Heart left ventricle (tissue), 16 donors: ENCODE measurements at regions of chr7 and their contacts with region 1.

Region 1: DNA sequence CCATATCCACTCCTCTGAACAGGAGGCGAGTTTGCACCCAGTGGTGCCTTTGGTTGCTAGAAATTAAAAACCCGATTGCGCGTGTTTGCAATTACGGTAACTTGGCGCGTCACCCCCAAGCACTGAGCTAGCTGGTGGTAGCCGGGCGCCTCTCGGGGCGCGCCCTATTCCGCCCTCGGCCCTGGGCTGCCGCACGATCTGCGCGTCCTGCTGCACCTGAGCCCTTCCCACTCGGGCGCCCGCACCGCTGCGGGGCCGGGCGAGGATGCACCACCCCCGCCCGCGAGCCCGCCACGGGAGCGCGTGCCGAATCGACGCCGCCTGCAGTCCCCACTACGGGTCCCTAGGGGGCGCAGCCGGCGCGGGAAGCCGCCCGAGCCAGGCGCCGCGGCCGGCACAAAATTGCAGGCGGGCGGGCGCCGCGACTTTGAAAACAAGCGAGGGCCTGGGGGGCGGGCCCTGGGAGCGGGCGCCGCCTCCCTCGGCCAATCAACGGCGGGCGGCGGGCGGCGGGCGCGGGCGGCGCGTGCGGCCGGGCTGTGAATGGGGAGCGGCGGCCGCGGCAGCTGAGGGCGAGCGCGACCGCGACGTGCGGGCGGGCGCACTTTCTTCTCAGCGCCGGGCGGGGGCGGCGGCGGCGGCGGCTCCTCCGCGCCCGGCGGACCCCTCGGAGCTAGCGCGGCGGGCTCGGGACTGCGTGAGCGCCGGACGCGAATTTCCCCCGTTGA is at the start of gene SDK1:
- DNase-seq: peak; percentile 91 to 96 (median 93)
- ATAC-seq: peak; percentile 77 to 99 (median 98)
- H3K4me3 ChIP-seq: peak within 1 kb of the TSS; percentile 34 to 84 (median 58)
- H3K27ac ChIP-seq: peak within 1 kb of the TSS in 3 of 12 donors; percentile 37 to 66 (median 62)
- H3K4me1 ChIP-seq: peaks cover 0 to 19% (median 10%) of the 10 kb centered on the region in 12 donors
- H3K27me3 ChIP-seq: peaks cover 0 to 38% (median 5%) of the 10 kb centered on the region in 9 donors
- CTCF ChIP-seq: peak; percentile 60 to 97 (median 92)
- POLR2A ChIP-seq: peak in 1 of 2 donors; percentile 28
- total RNA-seq, gene SDK1: 2.2 to 5.8 (median 3.6) TPM

Region 2: DNA sequence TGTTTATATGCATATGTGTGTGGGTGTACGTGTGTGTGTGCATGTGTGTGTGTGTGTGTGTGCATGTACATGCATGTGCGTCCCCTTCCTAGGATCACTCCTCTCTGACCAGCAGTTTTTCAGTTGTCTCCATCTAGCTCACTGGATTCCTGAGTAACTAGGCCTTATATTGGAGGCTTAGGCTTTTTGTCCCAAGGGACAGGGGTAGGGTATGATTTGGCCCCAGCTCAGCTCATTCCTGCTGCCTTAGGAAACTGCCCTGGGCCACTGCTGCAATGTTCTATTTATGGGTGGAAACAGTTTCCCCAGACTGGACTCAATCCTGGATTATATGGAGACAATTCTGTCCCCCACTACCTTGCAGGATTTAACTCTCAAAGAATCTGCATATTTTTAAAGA is 68.6 kb before region 1 on chr7:
- intact Hi-C with region 1: no loop called
- DNase-seq: no peak
- ATAC-seq: peak in 1 of 4 donors; percentile 72
- H3K4me3 ChIP-seq: no peak overlapping the region
- H3K27ac ChIP-seq: no peak overlapping the region
- H3K4me1 ChIP-seq: peaks cover 0 to 5% (median 0%) of the 10 kb centered on the region in 12 donors
- H3K27me3 ChIP-seq: no peaks in the 10 kb centered on the region
- CTCF ChIP-seq: no peak
- POLR2A ChIP-seq: no peak

Region 3: DNA sequence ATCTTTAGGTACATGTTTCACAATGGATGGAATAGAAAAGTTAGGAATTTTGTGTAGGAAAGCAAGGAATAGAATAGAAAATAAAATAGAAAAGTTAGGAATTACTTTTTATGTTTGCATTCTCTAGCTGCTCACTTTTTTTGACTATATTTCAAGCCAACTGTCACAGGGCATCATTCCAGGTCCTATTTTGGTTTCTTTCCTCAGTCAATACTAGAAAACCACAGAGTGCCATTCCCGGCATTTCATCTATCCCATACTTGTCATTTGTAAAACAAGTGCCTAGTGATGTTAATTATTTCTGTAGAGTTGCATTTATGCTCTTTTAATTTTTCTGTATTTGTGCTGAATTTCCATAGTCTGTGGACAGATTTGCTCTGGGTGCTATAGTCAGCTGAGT is 66.4 kb after region 1 on chr7:
- intact Hi-C with region 1: loop called in 1 of 10 experiments (anchors 10 kb)
- DNase-seq: no peak
- ATAC-seq: no peak
- H3K4me3 ChIP-seq: no peak overlapping the region
- H3K27ac ChIP-seq: no peak overlapping the region
- H3K4me1 ChIP-seq: peaks cover 0 to 7% (median 0%) of the 10 kb centered on the region in 12 donors
- H3K27me3 ChIP-seq: no peaks in the 10 kb centered on the region
- CTCF ChIP-seq: no peak
- POLR2A ChIP-seq: no peak

Region 4: GRCh38 chr7:3436746-3437145 is 135.9 kb after region 1 on chr7:
- intact Hi-C with region 1: no loop called
- DNase-seq: no peak
- ATAC-seq: no peak
- H3K4me3 ChIP-seq: no peak overlapping the region
- H3K27ac ChIP-seq: no peak overlapping the region
- H3K4me1 ChIP-seq: peaks cover 0 to 9% (median 0%) of the 10 kb centered on the region in 12 donors
- H3K27me3 ChIP-seq: no peaks in the 10 kb centered on the region
- CTCF ChIP-seq: no peak
- POLR2A ChIP-seq: no peak

Region 5: GRCh38 chr7:3673524-3673923 is 372.7 kb after region 1 on chr7:
- intact Hi-C with region 1: loop called in 2 of 10 experiments (anchors 5 to 10 kb)
- DNase-seq: no peak
- ATAC-seq: no peak
- H3K4me3 ChIP-seq: no peak overlapping the region
- H3K27ac ChIP-seq: no peak overlapping the region
- H3K4me1 ChIP-seq: no peaks in the 10 kb centered on the region
- H3K27me3 ChIP-seq: no peaks in the 10 kb centered on the region
- CTCF ChIP-seq: peak in 9 of 12 donors; percentile 17 to 47 (median 27)
- POLR2A ChIP-seq: no peak

Region 6: DNA sequence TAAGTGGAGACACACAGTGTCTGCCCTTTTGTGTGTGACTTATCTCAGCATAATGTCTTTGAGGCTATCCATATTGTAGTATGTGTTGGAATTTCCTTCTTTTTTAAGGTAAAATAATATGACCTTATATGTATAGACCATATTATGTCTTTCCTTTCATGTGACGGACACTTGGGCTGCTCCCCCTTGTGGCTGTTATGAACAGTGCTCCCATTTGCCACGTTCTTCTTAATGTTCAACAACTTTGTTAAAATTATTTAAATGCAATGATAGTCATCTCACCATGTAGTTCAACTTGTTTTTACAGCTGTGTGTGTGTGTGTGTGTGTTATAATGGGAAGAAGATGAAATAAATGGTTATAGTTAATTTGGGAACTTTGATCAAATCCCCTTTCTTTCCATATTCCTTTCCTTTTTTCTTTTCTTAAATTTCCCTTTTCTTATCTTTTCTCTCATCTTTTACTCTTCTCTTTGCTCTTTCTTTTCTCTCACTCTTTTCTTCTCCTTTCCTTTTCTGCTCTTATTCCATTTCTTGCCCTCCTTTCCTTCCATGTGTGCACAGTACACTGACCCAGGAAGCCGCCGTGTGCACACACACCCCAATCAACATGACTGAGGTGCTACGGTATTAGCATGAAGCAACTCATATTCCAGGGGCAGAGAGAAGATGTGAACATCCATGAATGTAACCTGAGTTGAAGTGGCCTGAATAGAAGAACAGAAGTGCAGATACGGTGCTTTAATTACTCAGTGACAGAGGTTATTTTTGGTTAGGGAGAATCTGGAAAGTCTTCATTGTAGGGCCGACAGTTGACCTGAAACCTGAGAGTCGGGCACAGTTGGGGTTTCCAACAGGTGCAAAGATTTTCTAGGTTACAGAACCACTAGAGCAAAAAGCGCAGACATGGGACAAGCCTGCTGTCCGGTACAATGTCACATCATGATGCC is 596.9 kb after region 1 on chr7:
- intact Hi-C with region 1: loop called in 8 of 10 experiments (anchors 5 kb)
- DNase-seq: no peak
- ATAC-seq: peak in 1 of 4 donors; percentile 56
- H3K4me3 ChIP-seq: no peak overlapping the region
- H3K27ac ChIP-seq: no peak overlapping the region
- H3K4me1 ChIP-seq: peaks cover 0 to 3% (median 0%) of the 10 kb centered on the region in 12 donors
- H3K27me3 ChIP-seq: no peaks in the 10 kb centered on the region
- CTCF ChIP-seq: peak; percentile 64 to 85 (median 76)
- POLR2A ChIP-seq: no peak